Activated T-helper 1 cell treated with anti-CD3 and anti-CD28 coated beads, Interleukin-12 subunit alpha, Interleukin-12 subunit beta, Interleukin-2, Interleukin-4 antibody, amounts not matched to agents 30 ng/mL and 10 ng/mL and 1 ng/mL, durations not matched to agents 14 hours and 24 hours and 36 hours (primary cell): ENCODE measurements at regions of chr11 and their contacts with region 1.

Region 1: DNA sequence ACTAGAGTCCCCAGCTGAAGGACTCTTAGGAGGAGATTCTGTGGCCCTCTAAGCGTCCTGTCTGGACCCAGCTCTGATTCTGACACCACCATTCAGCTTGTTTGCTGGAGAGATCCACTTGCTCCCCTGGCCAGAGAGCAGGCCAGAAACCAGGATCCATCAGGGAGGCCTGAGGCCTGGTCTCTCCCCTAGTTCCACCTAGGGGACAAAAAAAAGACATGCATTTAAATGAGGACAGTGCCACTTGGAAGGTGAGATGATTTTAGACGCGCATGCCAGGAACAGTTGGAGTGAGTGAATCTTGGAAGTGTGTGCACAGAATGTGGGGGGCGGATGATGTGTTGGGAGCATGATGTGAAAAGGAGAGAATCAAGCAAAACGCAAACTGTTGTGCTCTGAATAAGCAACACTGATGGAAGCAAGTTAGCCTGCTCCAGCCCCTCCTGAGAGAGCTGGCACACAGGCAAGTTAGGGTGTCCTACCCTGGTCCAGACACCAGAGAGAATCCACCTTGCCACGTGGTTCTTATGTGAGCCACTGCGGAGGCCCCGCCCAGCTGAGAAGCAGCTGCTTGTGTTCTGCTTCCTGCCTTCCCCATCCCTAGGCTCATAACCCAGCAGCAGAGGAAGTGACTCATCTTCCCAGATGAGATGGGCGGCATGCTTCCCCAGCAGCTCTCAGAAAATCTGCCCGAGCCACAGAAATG is 8.0 kb upstream of the SLCO2B1 start:
- DNase-seq: peak; percentile 76
- H3K4me3 Mint-ChIP-seq: peak overlapping the region; percentile 63
- H3K27ac Mint-ChIP-seq: peak overlapping the region; percentile 88
- H3K4me1 Mint-ChIP-seq: peaks cover 63% of the 10 kb centered on the region
- H3K27me3 Mint-ChIP-seq: peaks cover 11% of the 10 kb centered on the region

Region 2: DNA sequence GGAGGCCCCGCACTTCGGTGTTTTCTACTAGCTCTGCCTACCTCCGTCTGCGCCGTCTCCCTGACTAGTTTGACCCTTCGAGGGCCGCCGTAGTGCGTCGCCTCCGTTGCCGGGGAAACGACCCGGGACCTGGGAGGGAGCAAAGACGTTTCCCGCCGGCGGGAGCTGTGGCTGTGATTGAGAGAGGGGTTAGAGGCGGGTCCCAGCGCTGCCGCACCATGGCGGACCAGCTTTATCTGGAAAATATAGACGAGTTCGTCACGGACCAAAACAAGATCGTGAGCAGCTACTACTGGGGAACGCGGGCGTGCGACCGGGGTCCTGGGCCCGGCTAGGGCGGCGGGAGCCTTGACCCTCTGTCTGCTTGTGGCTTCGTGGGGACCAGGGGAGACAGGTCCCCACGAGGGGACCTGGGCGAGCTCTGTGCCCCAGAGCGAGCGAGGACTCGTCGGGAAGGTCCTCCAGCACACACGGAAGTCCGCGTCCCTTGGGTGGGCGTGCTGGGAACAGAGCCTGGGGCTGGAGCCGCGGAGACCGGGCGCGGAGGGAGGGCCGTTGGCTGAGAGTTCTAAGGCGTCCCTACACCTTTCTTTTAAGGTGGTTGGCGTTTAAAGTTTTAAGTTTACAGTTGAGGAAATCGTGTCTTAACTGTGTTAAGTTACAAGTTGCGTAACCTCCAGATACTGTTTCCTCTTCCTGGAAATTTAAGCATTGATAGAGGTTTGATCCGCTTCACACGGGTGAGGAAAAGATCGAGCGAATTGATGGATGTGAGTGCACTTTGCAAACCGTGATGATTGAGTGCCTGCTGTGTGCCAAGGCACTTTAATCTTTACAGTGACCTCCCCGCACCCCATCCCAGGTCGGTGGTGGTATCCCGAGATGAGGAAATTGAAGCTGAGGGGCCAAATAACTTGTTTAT is 550.2 kb before region 1 on chr11 and contains the start of gene POLD3:
- intact Hi-C with region 1: loop called (anchors 5 kb)
- DNase-seq: peak; percentile 90
- H3K4me3 Mint-ChIP-seq: peak within 1 kb of the TSS; percentile 100
- H3K27ac Mint-ChIP-seq: peak within 1 kb of the TSS; percentile 98
- H3K4me1 Mint-ChIP-seq: peaks cover 30% of the 10 kb centered on the region
- H3K27me3 Mint-ChIP-seq: peaks cover 3% of the 10 kb centered on the region
- total RNA-seq, gene POLD3: 50.1 and 52.7 TPM in 2 replicates

Region 3: GRCh38 chr11:74948898-74949747 is 193.7 kb before region 1 on chr11 and contains the starts of genes SPCS2 and XRRA1:
- intact Hi-C with region 1: loop called (anchors 5 kb)
- DNase-seq: peak; percentile 98
- H3K4me3 Mint-ChIP-seq: peak within 1 kb of the TSS; percentile 96
- H3K27ac Mint-ChIP-seq: peak within 1 kb of the TSS; percentile 96
- H3K4me1 Mint-ChIP-seq: peaks cover 46% of the 10 kb centered on the region
- H3K27me3 Mint-ChIP-seq: no peaks in the 10 kb centered on the region
- total RNA-seq, gene SPCS2: 167 and 172 TPM in 2 replicates
- total RNA-seq, gene XRRA1: 8.6 and 9.0 TPM in 2 replicates

Region 4: DNA sequence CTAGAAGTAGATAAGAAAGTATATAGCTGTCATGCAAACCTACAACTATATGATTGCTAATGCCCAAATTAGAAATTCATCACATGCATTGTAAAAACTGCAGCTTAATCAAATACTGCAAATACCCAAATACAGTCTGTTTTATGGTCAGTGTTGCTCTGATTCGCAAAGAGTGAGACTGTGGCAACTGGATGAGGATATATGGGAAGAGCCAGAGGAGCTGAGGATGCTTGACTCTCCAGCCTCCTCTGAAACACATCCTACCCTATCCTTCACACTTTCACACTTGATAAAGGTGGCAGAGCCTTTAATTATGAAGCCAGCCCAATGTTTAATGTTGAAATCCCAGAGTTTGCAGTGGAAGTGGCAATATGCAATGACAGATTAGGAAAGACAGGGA is 24.3 kb before region 1 on chr11:
- intact Hi-C with region 1: no loop called
- DNase-seq: no peak
- H3K4me3 Mint-ChIP-seq: no peak overlapping the region
- H3K27ac Mint-ChIP-seq: no peak overlapping the region
- H3K4me1 Mint-ChIP-seq: no peaks in the 10 kb centered on the region
- H3K27me3 Mint-ChIP-seq: peaks cover 6% of the 10 kb centered on the region

Region 5: GRCh38 chr11:75174781-75175370 is 32.0 kb after region 1 on chr11:
- intact Hi-C with region 1: loop called (anchors 2 kb)
- DNase-seq: peak; percentile 12
- H3K4me3 Mint-ChIP-seq: peak overlapping the region; percentile 0
- H3K27ac Mint-ChIP-seq: peak overlapping the region; percentile 68
- H3K4me1 Mint-ChIP-seq: peaks cover 18% of the 10 kb centered on the region
- H3K27me3 Mint-ChIP-seq: peaks cover 13% of the 10 kb centered on the region

Region 6: GRCh38 chr11:75214411-75214821 is 71.5 kb after region 1 on chr11:
- intact Hi-C with region 1: loop called (anchors 2 kb)
- DNase-seq: peak; percentile 68
- H3K4me3 Mint-ChIP-seq: no peak overlapping the region
- H3K27ac Mint-ChIP-seq: no peak overlapping the region
- H3K4me1 Mint-ChIP-seq: peaks cover 5% of the 10 kb centered on the region
- H3K27me3 Mint-ChIP-seq: peaks cover 10% of the 10 kb centered on the region

Region 7: GRCh38 chr11:75248690-75249268 is 105.9 kb after region 1 on chr11:
- intact Hi-C with region 1: loop called (anchors 1 kb)
- DNase-seq: peak; percentile 81
- H3K4me3 Mint-ChIP-seq: no peak overlapping the region
- H3K27ac Mint-ChIP-seq: no peak overlapping the region
- H3K4me1 Mint-ChIP-seq: peaks cover 6% of the 10 kb centered on the region
- H3K27me3 Mint-ChIP-seq: peaks cover 25% of the 10 kb centered on the region

Region 8: GRCh38 chr11:75532200-75533048 is 389.6 kb after region 1 on chr11:
- intact Hi-C with region 1: loop called (anchors 10 kb)
- DNase-seq: peak; percentile 74
- H3K4me3 Mint-ChIP-seq: peak overlapping the region; percentile 1
- H3K27ac Mint-ChIP-seq: no peak overlapping the region
- H3K4me1 Mint-ChIP-seq: peaks cover 35% of the 10 kb centered on the region
- H3K27me3 Mint-ChIP-seq: peaks cover 12% of the 10 kb centered on the region